Mammary epithelial cell (primary cell): ENCODE measurements at regions of chr5 and their contacts with region 1.

Region 1: GRCh38 chr5:112995764-112996618 is 19.4 kb downstream of the DCP2 start:
- DNase-seq: peak; percentile 46
- H3K4me3 ChIP-seq: no peak overlapping the region
- H3K27ac ChIP-seq: no peak overlapping the region
- H3K4me1 ChIP-seq: peaks cover 7% of the 10 kb centered on the region
- H3K27me3 ChIP-seq: no peaks in the 10 kb centered on the region
- CTCF ChIP-seq: peak; percentile 85 to 90

Region 2: GRCh38 chr5:113059232-113060040 is 63.4 kb after region 1 on chr5:
- CTCF ChIA-PET with region 1: no interaction called
- dilution Hi-C with region 1: no loop called
- in situ Hi-C with region 1: no loop called
- intact Hi-C with region 1: loop called (anchors 5 kb)
- DNase-seq: no peak
- H3K4me3 ChIP-seq: no peak overlapping the region
- H3K27ac ChIP-seq: no peak overlapping the region
- H3K4me1 ChIP-seq: peaks cover 6% of the 10 kb centered on the region
- H3K27me3 ChIP-seq: no peaks in the 10 kb centered on the region
- CTCF ChIP-seq: no peak

Region 3: DNA sequence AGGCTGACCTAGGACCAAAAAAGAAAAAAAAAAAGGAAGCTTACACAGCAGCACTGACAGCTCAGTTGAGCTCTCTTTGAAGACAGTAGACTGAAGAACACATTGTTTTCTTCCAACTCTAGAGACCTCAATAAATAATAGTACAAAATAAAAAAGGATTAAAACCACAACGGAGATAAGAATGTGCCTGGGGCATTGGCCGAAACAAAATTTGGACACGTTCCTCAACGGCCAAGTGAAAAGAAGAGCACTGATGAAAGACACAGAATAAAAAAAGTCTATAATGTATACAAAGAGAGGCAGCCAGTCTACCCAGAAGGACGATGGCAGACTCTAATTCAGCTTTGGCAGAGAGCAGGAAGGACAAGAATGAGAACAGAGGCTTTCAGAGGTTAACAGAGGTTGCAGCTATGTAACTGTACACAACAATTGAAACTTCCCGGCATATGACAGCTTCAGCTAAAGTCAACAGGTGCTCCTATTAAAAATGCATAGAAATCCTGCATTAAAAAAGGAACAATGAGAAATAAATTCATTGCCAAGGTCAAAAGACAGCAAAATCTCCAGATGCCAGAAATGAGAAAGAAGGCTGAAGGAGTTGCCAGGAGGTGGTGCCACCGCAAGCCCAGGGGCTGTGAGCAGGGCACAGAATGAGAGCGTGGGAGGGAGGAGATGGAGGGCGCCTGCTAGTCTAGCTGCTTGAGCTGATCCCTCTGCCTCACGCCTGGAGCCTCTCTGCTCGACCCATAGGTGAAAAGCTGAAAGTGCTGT is 94.5 kb after region 1 on chr5:
- CTCF ChIA-PET with region 1: no interaction called
- dilution Hi-C with region 1: no loop called
- in situ Hi-C with region 1: no loop called
- intact Hi-C with region 1: loop called (anchors 10 kb)
- DNase-seq: peak; percentile 17
- H3K4me3 ChIP-seq: no peak overlapping the region
- H3K27ac ChIP-seq: no peak overlapping the region
- H3K4me1 ChIP-seq: peaks cover 28% of the 10 kb centered on the region
- H3K27me3 ChIP-seq: no peaks in the 10 kb centered on the region
- CTCF ChIP-seq: peak; percentile 2 to 28

Region 4: GRCh38 chr5:113330533-113331208 is 334.7 kb after region 1 on chr5:
- CTCF ChIA-PET with region 1: no interaction called
- dilution Hi-C with region 1: no loop called
- in situ Hi-C with region 1: no loop called
- intact Hi-C with region 1: loop called (anchors 1 kb)
- DNase-seq: peak; percentile 50
- H3K4me3 ChIP-seq: no peak overlapping the region
- H3K27ac ChIP-seq: peak overlapping the region; percentile 25
- H3K4me1 ChIP-seq: peaks cover 12% of the 10 kb centered on the region
- H3K27me3 ChIP-seq: no peaks in the 10 kb centered on the region
- CTCF ChIP-seq: peak; percentile 38 to 56

Region 5: DNA sequence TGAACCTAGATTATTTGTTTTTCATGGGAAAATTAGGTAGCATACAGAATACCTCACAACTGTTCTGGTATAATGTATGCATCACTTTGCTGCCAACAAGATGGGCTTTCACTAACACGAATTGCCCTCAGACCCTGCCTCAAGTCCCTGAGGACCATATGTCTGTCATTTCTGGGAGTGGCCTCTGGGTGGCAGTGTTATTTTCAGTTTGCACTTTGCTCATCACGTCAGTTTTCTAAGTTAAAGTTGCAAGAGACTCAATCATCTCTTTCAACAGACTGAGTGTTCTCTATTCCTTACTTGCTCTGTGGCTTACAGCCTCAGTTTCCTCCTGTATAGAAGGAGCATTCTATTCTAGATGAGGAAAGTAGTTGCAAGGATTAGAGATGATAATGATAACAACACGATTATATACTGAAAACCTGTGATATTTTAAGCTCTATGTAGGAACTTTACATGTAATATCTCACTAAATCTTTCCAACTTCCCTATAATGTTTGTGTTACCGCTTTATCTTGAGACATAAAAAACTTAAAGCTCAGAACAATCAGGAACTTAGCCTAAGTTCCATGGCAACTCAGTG is 383.1 kb after region 1 on chr5:
- CTCF ChIA-PET with region 1: no interaction called
- dilution Hi-C with region 1: no loop called
- in situ Hi-C with region 1: no loop called
- intact Hi-C with region 1: loop called (anchors 1 kb)
- DNase-seq: peak; percentile 50
- H3K4me3 ChIP-seq: no peak overlapping the region
- H3K27ac ChIP-seq: no peak overlapping the region
- H3K4me1 ChIP-seq: peaks cover 44% of the 10 kb centered on the region
- H3K27me3 ChIP-seq: no peaks in the 10 kb centered on the region
- CTCF ChIP-seq: peak; percentile 76 to 79

Region 6: DNA sequence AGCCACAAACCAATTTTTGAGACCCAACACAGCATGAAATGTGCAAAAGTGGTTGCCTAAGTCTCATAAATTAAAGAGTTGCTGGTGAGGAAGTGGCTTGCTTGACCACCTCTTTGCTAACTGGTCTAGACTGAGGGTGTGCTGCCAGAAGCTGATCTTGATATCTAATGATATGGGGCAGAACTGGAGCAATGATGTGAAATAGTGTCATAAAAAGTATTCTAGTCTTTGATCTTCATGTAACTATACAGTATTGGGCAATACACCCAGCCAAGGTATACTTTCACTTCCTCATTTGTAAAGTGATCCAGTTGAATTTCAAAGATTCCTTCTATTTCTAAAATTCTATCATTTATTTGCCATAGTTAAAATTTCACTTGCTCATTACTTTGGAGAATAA is 511.6 kb after region 1 on chr5:
- CTCF ChIA-PET with region 1: interaction called, 3 read pairs
- dilution Hi-C with region 1: no loop called
- in situ Hi-C with region 1: loop called (anchors 10 to 25 kb)
- intact Hi-C with region 1: loop called (anchors 1 kb)
- DNase-seq: no peak
- H3K4me3 ChIP-seq: no peak overlapping the region
- H3K27ac ChIP-seq: no peak overlapping the region
- H3K4me1 ChIP-seq: peaks cover 32% of the 10 kb centered on the region
- H3K27me3 ChIP-seq: no peaks in the 10 kb centered on the region
- CTCF ChIP-seq: no peak

Region 7: DNA sequence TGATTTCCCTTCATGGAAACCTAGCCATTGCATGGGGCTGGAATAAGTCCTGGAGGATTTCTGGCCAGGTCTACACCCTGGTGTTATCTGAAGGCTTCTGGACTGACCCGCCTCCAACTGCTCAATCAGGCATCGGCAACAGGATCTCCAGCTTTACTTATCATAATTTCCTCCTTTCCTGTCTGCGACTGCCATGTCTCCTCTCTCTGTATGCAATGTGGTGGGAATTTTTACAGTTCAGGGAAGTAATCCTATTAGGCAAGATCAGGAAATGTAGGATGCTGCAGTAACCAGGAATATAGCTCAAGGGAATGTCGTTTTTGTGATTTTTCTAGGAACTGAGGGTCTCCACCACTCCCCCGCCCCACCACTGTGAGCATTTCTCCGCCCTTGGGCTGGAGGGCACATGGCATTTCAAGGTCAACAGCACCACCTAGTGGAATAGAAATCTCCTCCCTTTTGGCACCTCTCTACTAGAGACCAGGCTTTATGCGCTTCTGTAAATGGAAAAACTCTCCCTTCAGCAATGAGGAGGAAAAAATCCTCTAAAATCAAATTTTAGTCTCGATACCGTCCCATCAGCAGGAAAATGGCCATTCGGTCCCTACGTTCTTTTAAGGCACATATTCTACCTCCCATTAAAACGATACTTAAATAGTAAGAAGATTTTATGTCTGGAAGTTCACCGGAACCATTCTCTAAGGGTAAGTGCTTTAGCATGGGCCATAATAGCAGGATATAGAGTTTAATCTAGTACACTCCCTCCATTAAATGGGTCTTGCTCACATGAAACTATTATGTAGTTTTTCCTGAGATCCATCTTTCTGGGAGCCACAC is 610.5 kb after region 1 on chr5:
- CTCF ChIA-PET with region 1: no interaction called
- dilution Hi-C with region 1: no loop called
- in situ Hi-C with region 1: no loop called
- intact Hi-C with region 1: loop called (anchors 1 kb)
- DNase-seq: peak; percentile 38
- H3K4me3 ChIP-seq: no peak overlapping the region
- H3K27ac ChIP-seq: no peak overlapping the region
- H3K4me1 ChIP-seq: peaks cover 10% of the 10 kb centered on the region
- H3K27me3 ChIP-seq: no peaks in the 10 kb centered on the region
- CTCF ChIP-seq: peak; percentile 70 to 80